Posterior cingulate gyrus (tissue), 11 donors: ENCODE measurements at regions of chr3 and their contacts with region 1.

Region 1: GRCh38 chr3:23945903-23946751 is 1.0 kb downstream of the NR1D2 start:
- DNase-seq: peak; percentile 94 to 99 (median 96)

Region 2: DNA sequence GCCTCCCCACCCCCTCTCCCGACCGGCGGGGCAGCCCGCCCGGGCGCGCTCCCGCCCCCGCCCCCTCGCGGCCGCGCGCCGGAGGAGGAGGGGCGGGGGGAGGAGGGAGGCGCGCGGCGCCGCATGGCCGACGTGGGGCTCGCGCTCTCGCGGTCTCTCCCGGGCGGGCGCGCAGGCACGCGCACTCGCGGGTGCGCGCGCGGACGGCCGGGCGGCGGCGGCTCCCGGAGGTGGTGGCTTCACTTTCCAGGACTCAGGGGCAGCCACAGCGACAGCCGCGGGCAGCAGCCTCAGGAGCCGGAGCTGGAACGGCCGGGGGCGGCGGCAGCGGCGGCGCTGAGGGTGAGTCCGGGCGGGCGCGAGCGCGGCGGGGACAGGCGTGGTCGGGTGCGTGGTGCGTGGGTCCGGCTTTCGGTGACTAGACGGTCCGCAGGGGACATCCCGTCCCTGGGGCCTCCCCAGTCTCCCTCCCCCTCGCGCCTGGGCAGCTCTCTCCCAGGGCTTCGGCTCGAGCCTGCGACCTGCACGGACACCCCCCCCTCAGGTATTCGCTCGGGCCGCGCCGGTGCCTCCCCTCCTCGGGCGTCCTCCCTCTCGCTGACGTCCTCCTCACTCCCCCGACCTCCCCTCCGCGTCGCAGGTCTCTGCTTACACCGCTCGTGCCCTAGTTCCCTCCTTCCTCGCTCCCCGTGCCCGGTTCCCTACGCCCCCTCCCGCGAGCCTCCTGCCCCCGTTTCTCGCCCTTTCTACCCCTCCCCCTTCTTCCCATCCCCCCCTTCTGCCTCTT is 743.0 kb before region 1 on chr3 and contains the start of gene UBE2E2:
- intact Hi-C with region 1: loop called (anchors 10 kb)
- DNase-seq: peak; percentile 51 to 96 (median 72)

Region 3: DNA sequence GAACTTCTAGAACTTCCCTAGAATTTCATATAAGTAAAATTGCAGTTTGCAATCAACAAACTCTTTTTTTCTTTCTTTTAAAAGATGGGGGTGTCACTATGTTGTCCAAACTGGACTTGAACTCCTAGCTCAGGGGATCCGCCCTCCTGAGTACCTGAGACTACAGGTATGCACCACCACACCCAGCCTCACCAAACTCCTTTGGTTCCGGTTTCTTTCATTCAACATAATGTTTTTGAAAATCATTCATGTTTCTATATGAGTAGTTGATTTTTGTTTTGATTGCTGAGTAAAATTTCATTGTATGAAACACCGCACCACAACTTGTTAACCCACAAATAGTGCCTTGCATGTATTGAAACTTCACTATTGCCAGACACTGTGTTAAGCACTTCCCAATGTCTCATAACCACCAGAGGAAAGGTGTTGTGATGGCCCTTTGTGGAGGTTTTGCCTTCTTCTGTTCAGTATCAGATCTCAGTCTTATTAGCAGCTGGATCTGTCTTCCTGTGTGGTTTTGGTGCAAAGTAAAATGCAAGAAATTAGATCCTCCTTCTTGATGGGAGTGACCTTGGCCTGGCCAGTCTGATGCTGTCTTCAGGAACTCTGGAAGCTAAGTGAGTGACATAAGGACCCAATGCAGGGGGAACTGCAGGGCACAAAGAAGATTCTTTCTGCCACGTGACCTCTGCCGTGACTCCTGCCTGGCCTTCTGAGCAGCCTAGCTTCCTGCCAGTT is 219.1 kb before region 1 on chr3:
- intact Hi-C with region 1: no loop called
- DNase-seq: no peak

Region 4: GRCh38 chr3:23916886-23917678 is 29.0 kb before region 1 on chr3 and contains the starts of genes NKIRAS1 and RPL15:
- intact Hi-C with region 1: loop called (anchors 1 kb)
- DNase-seq: peak; percentile 94 to 99 (median 96)

Region 5: GRCh38 chr3:23968463-23969184 is 22.5 kb after region 1 on chr3:
- intact Hi-C with region 1: no loop called
- DNase-seq: no peak

Region 6: GRCh38 chr3:23991683-23992628 is 45.8 kb after region 1 on chr3:
- intact Hi-C with region 1: loop called (anchors 2 kb)
- DNase-seq: peak in 2 of 10 donors; percentile 31 to 61

Region 7: GRCh38 chr3:24110051-24110450 is 163.9 kb after region 1 on chr3:
- intact Hi-C with region 1: no loop called
- DNase-seq: no peak